Common myeloid progenitor, CD34-positive (primary cell): ENCODE measurements at regions of chr4 and their contacts with region 1.

Region 1: DNA sequence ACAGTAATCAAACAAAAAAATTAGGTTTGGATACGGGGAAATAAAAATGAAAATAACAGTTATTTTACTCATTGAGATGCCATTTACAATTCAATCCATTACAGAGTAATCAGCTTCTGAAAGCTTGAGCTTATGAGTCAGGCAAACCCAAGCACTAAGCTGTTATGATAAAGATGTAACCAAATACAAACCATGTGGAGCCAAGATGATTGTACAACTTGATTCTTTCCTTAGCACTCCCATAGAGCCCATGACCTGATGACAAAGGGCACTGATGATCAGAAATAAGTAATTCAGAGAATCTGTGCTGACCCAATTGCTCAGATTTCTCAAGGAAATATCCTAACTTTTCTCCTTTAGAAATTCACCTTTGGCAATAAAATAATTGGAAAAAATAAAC is 40.5 kb upstream of the PRKG2 start:
- DNase-seq: peak in 2 of 3 donors; percentile 34 to 64
- H3K4me3 ChIP-seq: no peak overlapping the region
- H3K27ac ChIP-seq: no peak overlapping the region
- H3K4me1 ChIP-seq: peaks cover 0 to 43% (median 21%) of the 10 kb centered on the region in 4 experiments
- H3K27me3 ChIP-seq: no peaks in the 10 kb centered on the region

Region 2: GRCh38 chr4:81245218-81246009 is 10.1 kb before region 1 on chr4:
- CTCF ChIA-PET with region 1: interaction called, 12 read pairs
- POLR2A ChIA-PET with region 1: no interaction called
- DNase-seq: no peak
- H3K4me3 ChIP-seq: no peak overlapping the region
- H3K27ac ChIP-seq: no peak overlapping the region
- H3K4me1 ChIP-seq: peaks cover 0 to 5% (median 2%) of the 10 kb centered on the region in 4 experiments
- H3K27me3 ChIP-seq: no peaks in the 10 kb centered on the region